ENCODE measurements at regions of chr7 and their contacts with region 1.

Region 1: DNA sequence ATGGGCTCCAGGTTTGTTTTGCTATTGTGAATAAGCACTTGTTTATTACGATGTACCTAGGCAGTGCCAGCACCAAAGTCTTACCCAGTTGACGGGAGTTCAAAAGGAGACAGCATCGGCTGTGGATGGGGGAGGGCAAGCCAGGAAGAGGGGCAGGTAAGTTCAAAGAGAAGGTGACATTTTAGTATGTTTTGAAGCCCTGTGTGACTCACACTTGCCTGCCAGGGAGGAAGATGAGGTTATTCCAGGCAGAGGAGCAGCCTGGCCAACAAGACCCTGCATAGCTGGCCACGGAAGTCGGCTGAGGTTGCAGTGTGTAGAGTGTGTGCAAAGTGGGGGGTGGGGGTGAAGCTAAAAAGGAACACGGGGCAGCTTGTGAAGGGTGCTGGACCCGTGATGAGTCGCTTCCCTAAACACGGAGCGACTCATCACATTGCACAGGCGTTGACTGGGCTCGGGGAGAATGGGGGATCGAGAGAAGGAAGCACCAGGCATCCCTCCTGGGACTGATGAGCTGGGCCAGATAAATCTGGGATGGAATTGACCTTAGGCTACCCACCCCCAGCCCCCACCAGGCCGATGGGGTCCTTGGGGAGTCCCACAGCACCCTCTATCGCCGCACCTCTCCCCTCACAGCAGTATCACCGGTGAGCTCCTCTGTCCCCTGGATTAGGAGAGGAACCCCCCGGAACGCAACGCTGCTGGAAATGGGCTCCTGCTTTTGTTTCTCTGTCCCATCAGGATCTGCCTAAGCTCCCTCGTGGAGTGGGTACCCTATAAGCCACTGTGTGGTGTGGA is 97.9 kb upstream of the IKZF1 start:
- DNase-seq: peak in 8 of 9 donors; percentile 53 to 85 (median 72)
- ATAC-seq: peak; percentile 67
- H3K4me3 ChIP-seq: peak overlapping the region; percentile 32
- H3K4me3 Mint-ChIP-seq: peak overlapping the region; percentile 54 to 87 (median 78)
- H3K27ac ChIP-seq: peak overlapping the region; percentile 66
- H3K27ac Mint-ChIP-seq: peak overlapping the region; percentile 86 to 98 (median 96)
- H3K4me1 ChIP-seq: peaks cover 20 to 73% of the 10 kb centered on the region in 2 donors
- H3K4me1 Mint-ChIP-seq: peaks cover 65 to 94% (median 81%) of the 10 kb centered on the region in 7 donors
- H3K27me3 ChIP-seq: no peaks in the 10 kb centered on the region
- H3K27me3 Mint-ChIP-seq: no peaks in the 10 kb centered on the region

Region 2: GRCh38 chr7:50147951-50148808 is 58.5 kb before region 1 on chr7:
- CTCF ChIA-PET with region 1: interaction called, 10 read pairs
- POLR2A ChIA-PET with region 1: interaction called, 12 read pairs
- intact Hi-C with region 1: loop called in 1 of 2 experiments (anchors 2 kb)
- DNase-seq: peak in 7 of 9 donors; percentile 52 to 83 (median 71)
- ATAC-seq: peak; percentile 91
- H3K4me3 ChIP-seq: no peak overlapping the region
- H3K4me3 Mint-ChIP-seq: peak overlapping the region in 8 of 10 donors; percentile 21 to 60 (median 48)
- H3K27ac ChIP-seq: peak overlapping the region; percentile 72
- H3K27ac Mint-ChIP-seq: peak overlapping the region; percentile 57 to 97 (median 87)
- H3K4me1 ChIP-seq: peaks cover 3 to 14% of the 10 kb centered on the region in 2 donors
- H3K4me1 Mint-ChIP-seq: peaks cover 18 to 63% (median 40%) of the 10 kb centered on the region in 7 donors
- H3K27me3 ChIP-seq: no peaks in the 10 kb centered on the region
- H3K27me3 Mint-ChIP-seq: no peaks in the 10 kb centered on the region

Region 3: GRCh38 chr7:50266635-50267386 is 60.2 kb after region 1 on chr7:
- CTCF ChIA-PET with region 1: interaction called, 34 read pairs
- POLR2A ChIA-PET with region 1: interaction called, 101 read pairs
- intact Hi-C with region 1: loop called (anchors 1 kb)
- DNase-seq: peak in 8 of 9 donors; percentile 79 to 86 (median 82)
- ATAC-seq: peak; percentile 87
- H3K4me3 ChIP-seq: peak overlapping the region; percentile 14
- H3K4me3 Mint-ChIP-seq: peak overlapping the region; percentile 69 to 99 (median 82)
- H3K27ac ChIP-seq: peak overlapping the region; percentile 66
- H3K27ac Mint-ChIP-seq: peak overlapping the region; percentile 87 to 99 (median 95)
- H3K4me1 ChIP-seq: peaks cover 87 to 98% of the 10 kb centered on the region in 2 donors
- H3K4me1 Mint-ChIP-seq: peaks cover 83 to 100% (median 98%) of the 10 kb centered on the region in 7 donors
- H3K27me3 ChIP-seq: no peaks in the 10 kb centered on the region
- H3K27me3 Mint-ChIP-seq: no peaks in the 10 kb centered on the region

Region 4: DNA sequence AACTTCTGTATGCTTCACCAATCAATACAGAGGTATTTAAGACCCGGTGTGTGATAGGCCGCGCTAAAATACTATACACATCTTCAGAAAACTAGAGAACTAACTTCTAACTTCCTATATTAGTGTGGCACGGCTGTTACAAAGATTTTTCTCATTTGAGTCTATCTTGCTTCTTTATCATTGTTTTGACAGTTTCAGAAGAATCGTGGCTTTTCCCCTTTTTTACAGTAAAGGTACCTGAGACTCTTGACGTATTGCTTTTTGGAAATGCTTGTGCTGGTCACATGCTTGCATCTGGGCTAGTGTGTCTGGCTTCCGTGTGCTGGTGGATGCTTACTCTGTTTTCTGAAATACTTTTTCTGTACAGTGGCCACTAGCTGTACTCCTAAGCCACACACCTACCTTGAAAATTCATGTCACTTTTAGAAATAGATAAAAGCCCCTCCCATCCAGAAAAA is 110.6 kb after region 1 on chr7:
- CTCF ChIA-PET with region 1: interaction called, 147 read pairs
- POLR2A ChIA-PET with region 1: interaction called, 416 read pairs
- intact Hi-C with region 1: loop called in 1 of 2 experiments (anchors 1 kb)
- DNase-seq: peak in 7 of 9 donors; percentile 71 to 92 (median 89)
- ATAC-seq: peak; percentile 85
- H3K4me3 ChIP-seq: peak overlapping the region; percentile 73
- H3K4me3 Mint-ChIP-seq: peak overlapping the region; percentile 81 to 100 (median 94)
- H3K27ac ChIP-seq: peak overlapping the region; percentile 90
- H3K27ac Mint-ChIP-seq: peak overlapping the region in 6 of 9 donors; percentile 90 to 100 (median 99)
- H3K4me1 ChIP-seq: peaks cover 78 to 92% of the 10 kb centered on the region in 2 donors
- H3K4me1 Mint-ChIP-seq: peaks cover 0 to 100% (median 95%) of the 10 kb centered on the region in 7 donors
- H3K27me3 ChIP-seq: no peaks in the 10 kb centered on the region
- H3K27me3 Mint-ChIP-seq: no peaks in the 10 kb centered on the region

Region 5: GRCh38 chr7:50349963-50350944 is 143.6 kb after region 1 on chr7:
- CTCF ChIA-PET with region 1: interaction called, 5 read pairs
- POLR2A ChIA-PET with region 1: interaction called, 32 read pairs
- intact Hi-C with region 1: no loop called
- DNase-seq: peak in 5 of 9 donors; percentile 55 to 77 (median 68)
- ATAC-seq: peak; percentile 51
- H3K4me3 ChIP-seq: peak overlapping the region; percentile 4
- H3K4me3 Mint-ChIP-seq: peak overlapping the region; percentile 71 to 95 (median 78)
- H3K27ac ChIP-seq: peak overlapping the region; percentile 93
- H3K27ac Mint-ChIP-seq: peak overlapping the region in 6 of 9 donors; percentile 91 to 100 (median 100)
- H3K4me1 ChIP-seq: peaks cover 96% of the 10 kb centered on the region in 2 donors
- H3K4me1 Mint-ChIP-seq: peaks cover 0 to 100% (median 97%) of the 10 kb centered on the region in 7 donors
- H3K27me3 ChIP-seq: no peaks in the 10 kb centered on the region
- H3K27me3 Mint-ChIP-seq: no peaks in the 10 kb centered on the region

Region 6: DNA sequence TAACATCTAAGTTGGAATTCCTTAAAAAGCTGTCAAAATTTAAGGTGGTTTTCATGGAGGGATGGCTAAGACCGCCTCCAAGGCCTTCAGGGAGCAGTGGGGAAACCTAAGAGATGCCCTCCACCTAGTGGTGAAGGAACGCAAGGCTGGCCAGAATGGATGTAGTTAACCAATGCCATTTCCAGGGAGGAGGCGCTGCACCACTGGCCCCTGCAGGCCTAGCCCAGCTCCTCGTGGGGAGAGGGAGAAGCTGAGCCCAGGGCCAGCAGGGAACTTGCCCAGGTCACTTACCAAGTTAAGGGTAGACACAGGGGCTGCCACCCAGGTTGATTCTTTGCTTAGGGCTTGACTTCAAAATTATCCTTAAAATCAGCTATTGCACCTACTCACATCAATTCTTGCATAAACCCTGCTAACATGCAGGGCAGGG is 211.4 kb after region 1 on chr7:
- CTCF ChIA-PET with region 1: interaction called, 45 read pairs
- POLR2A ChIA-PET with region 1: interaction called, 7 read pairs
- intact Hi-C with region 1: loop called (anchors 1 kb)
- DNase-seq: peak; percentile 31 to 68 (median 56)
- ATAC-seq: peak; percentile 91
- H3K4me3 ChIP-seq: no peak overlapping the region
- H3K4me3 Mint-ChIP-seq: no peak overlapping the region
- H3K27ac ChIP-seq: no peak overlapping the region
- H3K27ac Mint-ChIP-seq: peak overlapping the region in 1 of 9 donors; percentile 26
- H3K4me1 ChIP-seq: peaks cover 0 to 22% of the 10 kb centered on the region in 2 donors
- H3K4me1 Mint-ChIP-seq: peaks cover 5 to 35% (median 29%) of the 10 kb centered on the region in 7 donors
- H3K27me3 ChIP-seq: no peaks in the 10 kb centered on the region
- H3K27me3 Mint-ChIP-seq: no peaks in the 10 kb centered on the region

Region 7: DNA sequence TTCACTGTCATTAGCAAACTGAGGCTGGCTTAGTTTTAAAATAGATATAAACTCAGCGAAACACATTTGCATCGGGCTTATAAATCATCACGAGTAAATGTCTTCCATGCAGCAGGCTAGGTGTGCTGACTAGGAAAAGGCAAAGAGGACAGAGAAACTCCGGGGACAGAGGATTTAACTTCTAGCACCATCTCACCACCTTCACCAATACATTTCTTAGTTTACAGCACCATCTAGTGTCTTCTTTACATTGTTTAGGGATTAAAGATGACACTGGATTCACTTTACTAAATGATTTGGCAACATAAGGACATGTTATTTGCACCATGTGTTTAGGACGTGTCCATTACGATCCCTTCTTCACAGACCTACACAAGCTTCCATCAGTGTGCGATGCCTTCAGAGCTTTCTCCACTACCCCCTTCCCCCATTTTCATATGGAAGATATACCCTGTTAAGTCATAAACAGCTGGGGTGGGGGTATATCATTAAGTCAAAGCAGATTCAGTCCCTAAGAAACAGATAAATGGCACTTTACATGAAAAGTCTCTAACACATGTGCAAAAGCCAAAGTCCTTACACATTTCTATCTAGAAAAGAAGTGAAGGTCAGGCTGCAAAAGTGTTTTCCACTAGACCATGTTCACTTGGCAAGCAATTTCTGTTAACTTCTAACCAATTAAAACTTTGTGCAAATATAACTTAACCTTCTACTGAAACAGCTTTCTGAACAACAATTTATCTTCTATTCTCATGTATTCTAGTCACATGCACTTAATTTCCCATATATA is 472.8 kb after region 1 on chr7:
- CTCF ChIA-PET with region 1: no interaction called
- POLR2A ChIA-PET with region 1: no interaction called
- intact Hi-C with region 1: loop called in 1 of 2 experiments (anchors 1 kb)
- DNase-seq: peak in 6 of 9 donors; percentile 27 to 59 (median 54)
- ATAC-seq: peak; percentile 73
- H3K4me3 ChIP-seq: no peak overlapping the region
- H3K4me3 Mint-ChIP-seq: no peak overlapping the region
- H3K27ac ChIP-seq: no peak overlapping the region
- H3K27ac Mint-ChIP-seq: no peak overlapping the region
- H3K4me1 ChIP-seq: no peaks in the 10 kb centered on the region
- H3K4me1 Mint-ChIP-seq: peaks cover 0 to 5% (median 0%) of the 10 kb centered on the region in 7 donors
- H3K27me3 ChIP-seq: no peaks in the 10 kb centered on the region
- H3K27me3 Mint-ChIP-seq: peaks cover 0 to 22% (median 0%) of the 10 kb centered on the region in 5 donors

Measured in naive thymus-derived CD4-positive, alpha-beta T cell (primary cell).